Naive thymus-derived CD4-positive, alpha-beta T cell (primary cell): ENCODE measurements at regions of chr1 and their contacts with region 1.

Region 1: GRCh38 chr1:205977402-205978014 is 25.7 kb downstream of the RAB7B start:
- DNase-seq: peak; percentile 45 to 78 (median 68)
- ATAC-seq: peak; percentile 82
- H3K4me3 ChIP-seq: no peak overlapping the region
- H3K4me3 Mint-ChIP-seq: no peak overlapping the region
- H3K27ac ChIP-seq: no peak overlapping the region
- H3K27ac Mint-ChIP-seq: no peak overlapping the region
- H3K4me1 ChIP-seq: no peaks in the 10 kb centered on the region
- H3K4me1 Mint-ChIP-seq: peaks cover 0 to 2% (median 0%) of the 10 kb centered on the region in 7 donors
- H3K27me3 ChIP-seq: no peaks in the 10 kb centered on the region
- H3K27me3 Mint-ChIP-seq: peaks cover 0 to 2% (median 0%) of the 10 kb centered on the region in 5 donors

Region 2: GRCh38 chr1:205711104-205712020 is 266.1 kb before region 1 on chr1:
- CTCF ChIA-PET with region 1: interaction called, 5 read pairs
- POLR2A ChIA-PET with region 1: no interaction called
- intact Hi-C with region 1: loop called in 1 of 2 experiments (anchors 1 kb)
- DNase-seq: peak in 8 of 9 donors; percentile 36 to 72 (median 64)
- ATAC-seq: peak; percentile 91
- H3K4me3 ChIP-seq: no peak overlapping the region
- H3K4me3 Mint-ChIP-seq: no peak overlapping the region
- H3K27ac ChIP-seq: no peak overlapping the region
- H3K27ac Mint-ChIP-seq: peak overlapping the region in 6 of 9 donors; percentile 7 to 87 (median 15)
- H3K4me1 ChIP-seq: no peaks in the 10 kb centered on the region
- H3K4me1 Mint-ChIP-seq: peaks cover 9 to 28% (median 20%) of the 10 kb centered on the region in 7 donors
- H3K27me3 ChIP-seq: no peaks in the 10 kb centered on the region
- H3K27me3 Mint-ChIP-seq: no peaks in the 10 kb centered on the region

Region 3: GRCh38 chr1:205783904-205784303 is 193.6 kb before region 1 on chr1:
- CTCF ChIA-PET with region 1: interaction called, 32 read pairs
- POLR2A ChIA-PET with region 1: no interaction called
- intact Hi-C with region 1: no loop called
- DNase-seq: no peak
- ATAC-seq: no peak
- H3K4me3 ChIP-seq: no peak overlapping the region
- H3K4me3 Mint-ChIP-seq: no peak overlapping the region
- H3K27ac ChIP-seq: no peak overlapping the region
- H3K27ac Mint-ChIP-seq: no peak overlapping the region
- H3K4me1 ChIP-seq: peaks cover 0 to 8% of the 10 kb centered on the region in 2 donors
- H3K4me1 Mint-ChIP-seq: peaks cover 6 to 16% (median 9%) of the 10 kb centered on the region in 7 donors
- H3K27me3 ChIP-seq: no peaks in the 10 kb centered on the region
- H3K27me3 Mint-ChIP-seq: no peaks in the 10 kb centered on the region

Region 4: GRCh38 chr1:205919026-205919746 is 58.3 kb before region 1 on chr1:
- CTCF ChIA-PET with region 1: interaction called, 15 read pairs
- POLR2A ChIA-PET with region 1: no interaction called
- intact Hi-C with region 1: loop called (anchors 1 kb)
- DNase-seq: peak; percentile 11 to 66 (median 47)
- ATAC-seq: peak; percentile 80
- H3K4me3 ChIP-seq: no peak overlapping the region
- H3K4me3 Mint-ChIP-seq: no peak overlapping the region
- H3K27ac ChIP-seq: no peak overlapping the region
- H3K27ac Mint-ChIP-seq: no peak overlapping the region
- H3K4me1 ChIP-seq: no peaks in the 10 kb centered on the region
- H3K4me1 Mint-ChIP-seq: no peaks in the 10 kb centered on the region
- H3K27me3 ChIP-seq: no peaks in the 10 kb centered on the region
- H3K27me3 Mint-ChIP-seq: peaks cover 0 to 3% (median 0%) of the 10 kb centered on the region in 5 donors

Region 5: DNA sequence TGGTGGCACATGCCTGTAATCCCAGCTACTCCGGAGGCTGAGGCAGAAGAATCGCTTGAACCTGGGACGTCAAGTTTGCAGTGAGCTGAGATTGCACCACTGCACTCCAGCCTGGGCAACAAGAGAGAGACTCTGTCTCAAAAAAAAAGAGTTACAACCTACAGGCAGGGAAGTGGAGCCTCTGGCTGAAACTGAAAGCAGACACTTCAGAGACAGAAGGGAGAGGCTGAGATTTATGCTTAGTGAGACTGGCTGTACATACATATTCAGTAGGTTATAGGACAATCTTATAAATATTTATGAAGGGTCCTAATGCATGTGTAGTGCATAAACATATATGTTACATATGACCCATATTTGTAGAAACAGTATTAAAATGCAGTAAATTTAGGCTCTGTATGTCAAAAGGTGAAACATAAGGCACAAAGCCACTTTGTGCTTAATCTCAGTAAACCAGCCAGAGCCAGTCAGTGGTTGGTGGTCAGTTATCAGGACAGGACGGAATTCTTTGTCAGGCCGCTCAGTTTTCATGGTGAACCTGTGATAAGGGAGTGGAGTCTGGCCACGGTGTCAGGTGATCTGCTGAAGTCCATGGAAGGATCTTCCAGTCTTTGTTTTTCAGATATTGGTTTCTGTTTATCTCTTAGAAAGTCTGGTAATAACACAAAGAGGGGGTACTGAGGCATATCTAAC is 89.1 kb after region 1 on chr1:
- CTCF ChIA-PET with region 1: no interaction called
- POLR2A ChIA-PET with region 1: no interaction called
- intact Hi-C with region 1: no loop called
- DNase-seq: no peak
- ATAC-seq: peak; percentile 34
- H3K4me3 ChIP-seq: no peak overlapping the region
- H3K4me3 Mint-ChIP-seq: no peak overlapping the region
- H3K27ac ChIP-seq: no peak overlapping the region
- H3K27ac Mint-ChIP-seq: no peak overlapping the region
- H3K4me1 ChIP-seq: no peaks in the 10 kb centered on the region
- H3K4me1 Mint-ChIP-seq: peaks cover 0 to 13% (median 8%) of the 10 kb centered on the region in 7 donors
- H3K27me3 ChIP-seq: no peaks in the 10 kb centered on the region
- H3K27me3 Mint-ChIP-seq: peaks cover 0 to 49% (median 0%) of the 10 kb centered on the region in 5 donors

Region 6: GRCh38 chr1:206117151-206117948 is 139.8 kb after region 1 on chr1 and contains the start of gene AVPR1B:
- CTCF ChIA-PET with region 1: no interaction called
- POLR2A ChIA-PET with region 1: no interaction called
- intact Hi-C with region 1: no loop called
- DNase-seq: peak in 1 of 9 donors; percentile 28
- ATAC-seq: peak; percentile 29
- H3K4me3 ChIP-seq: no peak within 1 kb of the TSS
- H3K4me3 Mint-ChIP-seq: peak within 1 kb of the TSS; percentile 20 to 83 (median 57)
- H3K27ac ChIP-seq: no peak within 1 kb of the TSS
- H3K27ac Mint-ChIP-seq: no peak within 1 kb of the TSS
- H3K4me1 ChIP-seq: no peaks in the 10 kb centered on the region
- H3K4me1 Mint-ChIP-seq: peaks cover 7 to 11% (median 9%) of the 10 kb centered on the region in 7 donors
- H3K27me3 ChIP-seq: no peaks in the 10 kb centered on the region
- H3K27me3 Mint-ChIP-seq: peaks cover 45 to 81% (median 52%) of the 10 kb centered on the region in 5 donors
- total RNA-seq, gene AVPR1B: 0.27 TPM in 1 of 5 experiments, not detected in the others